ENCODE measurements at regions of chr6 and their contacts with region 1.

Region 1: GRCh38 chr6:11009353-11009752 is 34.8 kb downstream of the ELOVL2 start:
- DNase-seq: peak; percentile 62
- ATAC-seq: peak; percentile 17
- H3K4me3 ChIP-seq: peak overlapping the region; percentile 24
- H3K27ac ChIP-seq: peak overlapping the region; percentile 76; the same call in 1 of the 2 replicates
- H3K4me1 ChIP-seq: peaks cover 42% of the 10 kb centered on the region
- H3K27me3 ChIP-seq: no peaks in the 10 kb centered on the region
- CTCF ChIP-seq: no peak

Region 2: DNA sequence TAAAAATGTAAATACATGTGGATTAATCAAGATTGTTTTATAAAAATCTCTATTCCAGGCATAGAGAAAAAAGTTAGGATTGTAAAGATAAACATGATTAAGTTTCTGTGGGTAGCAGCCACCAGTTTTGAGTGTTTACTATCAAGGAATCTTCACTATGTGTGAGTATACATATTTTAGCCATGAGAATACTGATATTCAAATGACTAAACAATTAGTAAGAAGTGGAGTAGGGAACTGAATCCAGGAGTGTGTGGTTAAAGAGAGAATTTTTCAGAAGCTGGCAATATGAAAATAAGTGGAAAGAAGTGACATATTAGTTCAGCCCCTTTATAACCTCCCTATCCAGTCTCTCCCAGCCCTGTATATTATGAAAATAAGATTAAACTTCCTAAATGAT is 24.5 kb after region 1 on chr6:
- CTCF ChIA-PET with region 1: no interaction called
- POLR2A ChIA-PET with region 1: no interaction called
- intact Hi-C with region 1: loop called (anchors 1 kb)
- DNase-seq: peak; percentile 78
- ATAC-seq: peak; percentile 94
- H3K4me3 ChIP-seq: no peak overlapping the region
- H3K27ac ChIP-seq: no peak overlapping the region
- H3K4me1 ChIP-seq: peaks cover 16% of the 10 kb centered on the region
- H3K27me3 ChIP-seq: no peaks in the 10 kb centered on the region
- CTCF ChIP-seq: no peak

Measured in PC-3 (cell line).